Activated T-helper 2 cell treated with anti-CD3 and anti-CD28 coated beads, Interferon-gamma antibody, Interleukin-2, Interleukin-4, amounts not matched to agents 10 μg/mL and 5 μg/mL and 100 μg/mL, durations not matched to agents 14 hours and 24 hours and 36 hours (primary cell): ENCODE measurements at regions of chr12 and their contacts with region 1.

Region 1: DNA sequence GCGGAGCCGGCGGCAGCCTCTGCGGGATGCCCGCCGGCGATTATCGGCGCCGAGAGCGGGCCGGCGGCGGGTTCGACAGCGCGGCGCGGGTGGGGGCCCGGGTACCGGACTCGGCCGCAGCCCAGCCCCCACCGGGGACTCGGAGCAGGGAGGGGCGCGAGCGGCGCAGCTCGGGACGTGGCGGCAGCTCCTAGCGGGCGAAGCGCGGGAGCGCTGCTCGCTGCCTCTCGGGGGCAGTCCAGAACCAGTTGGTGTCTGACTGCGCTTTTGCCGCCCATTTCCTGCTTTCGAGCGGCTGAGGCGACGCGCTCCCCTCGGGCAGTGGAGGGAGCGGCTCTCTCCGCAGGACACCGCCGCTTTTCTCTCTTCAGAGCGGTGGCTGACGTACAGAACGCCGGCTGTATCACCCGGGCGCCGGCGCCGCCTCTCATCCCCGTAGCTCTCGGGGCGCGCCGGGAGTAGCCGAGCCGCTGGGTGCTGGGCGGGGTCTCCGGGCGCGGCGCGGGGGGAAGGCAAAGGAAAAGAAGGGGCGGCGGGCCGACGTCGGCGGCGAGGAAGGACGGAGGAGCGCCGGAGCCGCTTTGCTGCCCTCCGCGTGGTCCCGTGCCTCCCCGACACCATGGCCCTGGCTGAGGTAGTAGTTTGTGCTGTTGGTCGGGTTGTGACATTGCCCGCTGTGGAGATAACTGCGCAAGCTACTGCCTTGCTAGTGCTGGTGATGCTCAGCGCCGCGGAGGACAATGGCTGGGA is 136.6 kb downstream of the MON2 start:
- DNase-seq: peak; percentile 80
- H3K4me3 Mint-ChIP-seq: peak overlapping the region; percentile 89
- H3K27ac Mint-ChIP-seq: peak overlapping the region; percentile 89
- H3K4me1 Mint-ChIP-seq: peaks cover 41% of the 10 kb centered on the region
- H3K27me3 Mint-ChIP-seq: no peaks in the 10 kb centered on the region

Region 2: DNA sequence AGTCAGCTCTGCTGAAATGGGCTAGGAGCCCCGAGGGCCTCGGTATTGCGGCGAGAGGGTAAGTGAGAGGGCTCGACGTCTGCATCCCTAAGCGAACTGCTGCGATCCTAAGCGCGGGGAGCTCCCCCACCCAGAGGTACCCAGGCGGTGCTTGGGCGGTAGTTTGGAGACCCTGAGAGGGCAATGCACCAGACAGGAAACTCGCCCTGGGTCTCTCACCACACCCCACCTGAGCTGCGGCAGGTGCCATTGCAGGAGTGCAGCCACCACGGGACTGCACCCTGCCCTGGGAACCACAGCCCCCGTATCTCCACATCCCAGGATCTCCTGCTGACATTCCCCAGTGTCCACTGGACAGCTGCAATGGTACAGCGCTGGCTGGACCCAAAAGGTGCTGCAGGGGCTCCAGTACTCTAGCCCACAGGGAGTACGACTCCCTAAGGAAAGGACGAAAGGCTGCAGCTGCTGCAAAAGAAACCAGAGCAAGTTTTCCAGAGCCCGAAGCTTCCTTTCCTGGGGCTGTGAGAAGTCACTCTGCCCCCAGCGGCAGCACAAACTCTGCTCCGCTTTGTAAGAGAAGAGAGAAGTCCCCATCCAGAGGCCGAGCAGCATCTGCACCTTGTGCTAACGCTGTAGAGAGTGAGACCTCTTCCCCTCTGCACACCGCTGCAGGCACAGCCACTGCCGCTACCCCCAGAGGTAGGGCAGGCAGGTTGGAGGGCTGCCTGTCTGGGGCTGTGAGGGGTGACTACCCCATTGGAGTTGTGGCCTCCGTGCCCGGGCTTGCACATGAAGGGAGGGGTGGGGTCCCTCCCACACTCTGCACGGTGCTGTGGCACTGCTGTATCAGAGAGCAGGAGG is 167.7 kb before region 1 on chr12:
- intact Hi-C with region 1: loop called (anchors 10 kb)
- DNase-seq: peak; percentile 18
- H3K4me3 Mint-ChIP-seq: peak overlapping the region; percentile 72
- H3K27ac Mint-ChIP-seq: no peak overlapping the region
- H3K4me1 Mint-ChIP-seq: peaks cover 19% of the 10 kb centered on the region
- H3K27me3 Mint-ChIP-seq: peaks cover 52% of the 10 kb centered on the region

Region 3: GRCh38 chr12:62522984-62523383 is 80.3 kb before region 1 on chr12:
- intact Hi-C with region 1: loop called (anchors 2 kb)
- DNase-seq: no peak
- H3K4me3 Mint-ChIP-seq: no peak overlapping the region
- H3K27ac Mint-ChIP-seq: no peak overlapping the region
- H3K4me1 Mint-ChIP-seq: peaks cover 31% of the 10 kb centered on the region
- H3K27me3 Mint-ChIP-seq: no peaks in the 10 kb centered on the region

Region 4: GRCh38 chr12:62758216-62758615 is 155.0 kb after region 1 on chr12:
- intact Hi-C with region 1: loop called (anchors 1 kb)
- DNase-seq: no peak
- H3K4me3 Mint-ChIP-seq: no peak overlapping the region
- H3K27ac Mint-ChIP-seq: no peak overlapping the region
- H3K4me1 Mint-ChIP-seq: peaks cover 23% of the 10 kb centered on the region
- H3K27me3 Mint-ChIP-seq: peaks cover 10% of the 10 kb centered on the region

Region 5: GRCh38 chr12:62813031-62813829 is 210.0 kb after region 1 on chr12:
- intact Hi-C with region 1: loop called (anchors 1 kb)
- DNase-seq: peak; percentile 10
- H3K4me3 Mint-ChIP-seq: no peak overlapping the region
- H3K27ac Mint-ChIP-seq: no peak overlapping the region
- H3K4me1 Mint-ChIP-seq: peaks cover 20% of the 10 kb centered on the region
- H3K27me3 Mint-ChIP-seq: peaks cover 28% of the 10 kb centered on the region